GM18951 (cell line): ENCODE measurements at regions of chr21 and their contacts with region 1.

Region 1: DNA sequence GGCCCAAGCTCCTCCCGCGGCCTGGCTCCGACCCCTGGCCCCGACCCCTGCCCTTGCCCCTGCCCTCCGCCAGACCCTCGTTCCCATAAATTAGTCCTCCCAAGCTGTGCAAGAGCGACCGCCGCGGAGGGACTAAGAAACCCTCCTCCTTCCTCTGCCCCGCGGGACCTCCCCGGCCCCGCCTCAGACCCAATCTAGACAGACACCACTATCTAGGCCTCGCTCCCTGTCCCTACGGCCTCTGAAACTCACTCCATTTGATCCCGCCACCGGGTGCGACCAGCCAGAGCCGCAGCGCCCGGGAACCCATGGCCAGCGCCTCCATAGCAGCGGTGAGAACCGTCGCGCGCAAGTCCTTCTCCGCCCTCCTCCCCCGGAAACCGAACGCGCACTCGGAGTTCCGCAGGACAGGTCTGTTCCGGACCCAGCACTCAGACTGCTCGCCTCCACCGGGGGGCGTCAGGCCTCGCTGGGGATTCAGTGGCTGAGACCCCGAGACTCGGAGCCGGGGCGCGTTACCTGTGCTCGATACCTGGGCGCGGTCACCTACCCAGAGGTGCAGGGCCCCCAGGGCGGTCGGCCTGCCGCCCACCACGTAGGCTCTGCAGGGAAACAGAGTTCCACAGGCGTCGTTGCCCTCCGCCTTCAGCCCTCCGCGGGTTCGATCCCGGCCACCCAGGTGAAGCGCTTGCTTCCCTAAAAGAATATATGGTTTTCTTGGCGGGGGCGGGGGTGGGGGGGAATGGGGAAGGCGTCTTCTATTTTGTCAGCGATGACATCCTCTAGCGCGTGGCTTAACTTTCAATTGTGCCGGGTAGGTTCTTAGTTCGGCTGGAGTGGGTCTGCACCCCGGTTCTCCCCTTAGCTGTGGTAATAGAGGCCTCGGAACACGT is at the start of gene MRPL39:
- POLR2A ChIP-seq: peak; percentile 87

Region 2: GRCh38 chr21:25717491-25718147 is 110.2 kb after region 1 on chr21:
- in situ Hi-C with region 1: loop called (anchors 10 kb)
- POLR2A ChIP-seq: no peak

Region 3: DNA sequence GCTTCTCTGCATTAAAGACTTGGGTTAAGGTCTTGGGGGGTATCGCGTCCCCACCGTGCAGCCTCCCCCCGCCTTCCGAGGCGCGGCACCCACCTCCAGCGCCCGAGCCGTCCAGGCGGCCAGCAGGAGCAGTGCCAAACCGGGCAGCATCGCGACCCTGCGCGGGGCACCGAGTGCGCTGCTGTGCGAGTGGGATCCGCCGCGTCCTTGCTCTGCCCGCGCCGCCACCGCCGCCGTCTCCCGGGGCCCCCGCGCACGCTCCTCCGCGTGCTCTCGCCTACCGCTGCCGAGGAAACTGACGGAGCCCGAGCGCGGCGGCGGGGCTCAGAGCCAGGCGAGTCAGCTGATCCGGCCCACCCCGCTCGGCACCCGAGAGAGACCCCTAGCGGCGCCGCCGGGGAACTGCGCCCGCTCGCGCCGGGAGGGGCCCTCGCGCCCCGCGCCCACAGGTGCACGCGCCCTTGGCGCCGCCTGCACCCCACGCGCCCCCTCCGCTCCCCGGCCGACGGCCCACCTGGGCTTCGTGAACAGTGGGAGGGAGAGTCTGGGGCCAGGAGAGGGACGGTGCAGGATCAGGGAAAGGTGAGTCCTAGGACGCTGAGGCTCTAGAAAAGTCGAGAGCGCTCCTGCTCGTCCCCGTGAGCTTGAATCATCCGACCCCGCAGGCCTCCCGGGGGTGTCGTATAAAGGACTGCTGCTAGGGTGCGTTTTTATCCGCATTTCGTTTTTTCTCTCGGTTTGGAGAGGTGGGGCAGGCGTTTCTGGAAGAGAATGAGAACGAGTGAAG is 563.3 kb after region 1 on chr21 and contains the start of gene APP:
- in situ Hi-C with region 1: loop called (anchors 25 kb)
- POLR2A ChIP-seq: peak; percentile 70

Region 4: DNA sequence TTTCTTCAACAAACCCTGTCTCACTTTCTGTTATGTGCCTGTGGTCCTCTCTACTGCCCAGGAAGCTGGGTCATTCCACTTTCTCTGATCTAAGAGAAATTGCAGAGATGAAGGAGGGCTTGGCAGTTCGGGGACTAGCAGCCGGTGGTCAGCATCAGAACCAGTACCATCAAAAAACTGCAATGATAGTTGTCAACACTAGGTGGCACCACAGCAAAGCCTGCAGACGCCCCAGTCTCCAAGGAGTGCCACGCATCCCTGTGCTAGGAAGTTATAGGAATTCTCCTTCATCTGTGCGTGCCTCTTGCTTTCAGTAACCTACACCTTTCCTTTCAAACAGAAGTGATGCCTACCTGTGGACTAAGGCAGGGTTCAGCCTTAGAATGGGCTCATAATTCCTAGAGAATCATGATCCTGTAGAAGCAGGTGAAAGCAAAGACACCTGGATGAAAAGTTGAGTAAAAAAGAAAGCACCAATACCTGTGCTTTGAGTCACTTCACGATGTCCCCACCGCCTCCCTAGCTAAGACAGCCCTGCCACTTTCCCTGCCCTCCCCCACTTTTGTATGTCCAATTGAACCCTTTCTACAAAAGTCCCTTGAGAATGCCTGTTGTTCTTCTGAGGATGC is 1108.6 kb after region 1 on chr21:
- in situ Hi-C with region 1: loop called (anchors 25 kb)
- POLR2A ChIP-seq: no peak